ENCODE measurements at regions of chr1 and their contacts with region 1.

Region 1: GRCh38 chr1:94812985-94813384 is 7.2 kb upstream of the SLC44A3 start:
- DNase-seq: no peak
- ATAC-seq: no peak
- H3K4me3 ChIP-seq: no peak overlapping the region
- H3K27ac ChIP-seq: no peak overlapping the region
- H3K4me1 ChIP-seq: peaks cover 2% of the 10 kb centered on the region
- H3K27me3 ChIP-seq: no peaks in the 10 kb centered on the region
- CTCF ChIP-seq: no peak
- POLR2A ChIP-seq: no peak

Region 2: DNA sequence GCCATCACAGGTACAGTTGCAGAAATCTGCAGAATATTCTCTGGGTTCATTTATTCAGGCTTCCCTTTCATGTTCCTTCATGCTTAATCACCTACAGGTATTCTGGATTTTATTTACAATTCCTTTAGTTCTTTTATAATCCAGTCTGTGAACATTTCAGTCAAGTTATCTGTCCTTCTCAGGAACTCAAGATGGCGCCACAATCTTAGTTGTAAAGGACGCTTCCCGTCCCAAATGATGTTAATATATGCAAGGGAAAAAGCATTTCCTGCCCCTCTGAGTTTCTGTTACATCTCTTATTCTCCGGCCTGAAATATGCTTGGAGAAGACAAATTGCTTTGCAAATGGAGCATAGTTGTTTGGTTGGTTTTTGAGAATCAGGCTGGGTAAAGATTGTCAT is 290.7 kb before region 1 on chr1:
- intact Hi-C with region 1: loop called (anchors 5 kb)
- DNase-seq: peak in 2 of 4 donors; percentile 18 to 33
- ATAC-seq: no peak
- H3K4me3 ChIP-seq: no peak overlapping the region
- H3K27ac ChIP-seq: no peak overlapping the region
- H3K4me1 ChIP-seq: no peaks in the 10 kb centered on the region
- H3K27me3 ChIP-seq: no peaks in the 10 kb centered on the region
- CTCF ChIP-seq: peak in 5 of 7 experiments; percentile 18 to 60 (median 47)
- POLR2A ChIP-seq: no peak

Measured in body of pancreas (tissue), 4 donors.